T-cell (primary cell): ENCODE measurements at regions of chrX and their contacts with region 1.

Region 1: DNA sequence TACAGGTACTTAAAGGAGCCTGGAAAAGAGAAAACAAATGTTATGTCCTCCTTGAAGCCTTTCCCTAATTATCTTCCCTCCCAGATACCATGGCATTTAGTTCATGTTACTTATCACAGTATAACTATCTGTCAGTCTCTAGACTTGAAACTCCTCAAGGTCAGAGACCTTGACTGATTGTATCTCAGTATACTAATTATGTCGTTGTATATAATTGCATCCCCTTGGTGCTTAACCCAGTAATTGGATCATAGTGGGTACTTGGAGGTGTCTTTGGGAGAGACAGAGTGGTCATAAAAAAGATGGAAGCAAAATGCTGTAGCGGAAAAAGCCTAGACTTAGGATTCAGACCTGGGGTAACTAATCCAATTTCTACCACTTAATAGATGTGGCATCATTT is 8.1 kb downstream of the IGBP1 start:
- DNase-seq: no peak
- ATAC-seq: no peak
- H3K4me3 ChIP-seq: no peak overlapping the region
- H3K4me3 Mint-ChIP-seq: no peak overlapping the region
- H3K27ac ChIP-seq: no peak overlapping the region
- H3K27ac Mint-ChIP-seq: no peak overlapping the region
- H3K4me1 ChIP-seq: peaks cover 0 to 4% of the 10 kb centered on the region in 2 experiments
- H3K4me1 Mint-ChIP-seq: peaks cover 0 to 22% (median 11%) of the 10 kb centered on the region in 3 donors
- H3K27me3 ChIP-seq: no peaks in the 10 kb centered on the region
- H3K27me3 Mint-ChIP-seq: peaks cover 0 to 5% of the 10 kb centered on the region in 2 donors

Region 2: DNA sequence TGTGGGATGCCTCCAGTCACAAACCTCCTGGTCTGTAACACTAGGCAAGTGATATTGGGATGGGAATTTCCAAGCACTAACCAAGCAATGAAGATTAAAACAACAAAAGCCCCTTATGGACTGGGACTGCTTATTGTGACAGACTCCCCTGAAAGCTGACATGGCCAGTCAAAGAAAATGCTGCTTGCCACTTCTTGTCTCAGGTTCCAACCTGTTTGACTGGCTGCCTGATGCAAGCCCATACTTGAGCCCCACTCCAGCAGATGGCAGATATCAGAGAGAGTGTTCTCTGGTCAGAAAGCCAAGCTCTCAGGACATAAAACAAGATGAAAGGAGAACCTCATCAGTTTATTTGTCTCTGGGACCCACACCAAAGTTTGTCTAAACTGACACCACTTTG is 23.7 kb before region 1 on chrX:
- CTCF ChIA-PET with region 1: no interaction called
- POLR2A ChIA-PET with region 1: no interaction called
- DNase-seq: no peak
- ATAC-seq: no peak
- H3K4me3 ChIP-seq: no peak overlapping the region
- H3K4me3 Mint-ChIP-seq: no peak overlapping the region
- H3K27ac ChIP-seq: no peak overlapping the region
- H3K27ac Mint-ChIP-seq: no peak overlapping the region
- H3K4me1 ChIP-seq: no peaks in the 10 kb centered on the region
- H3K4me1 Mint-ChIP-seq: no peaks in the 10 kb centered on the region
- H3K27me3 ChIP-seq: no peaks in the 10 kb centered on the region
- H3K27me3 Mint-ChIP-seq: peaks cover 0 to 25% of the 10 kb centered on the region in 2 donors

Region 3: GRCh38 chrX:70196961-70197805 is 55.8 kb after region 1 on chrX:
- CTCF ChIA-PET with region 1: no interaction called
- POLR2A ChIA-PET with region 1: no interaction called
- DNase-seq: peak; percentile 3 to 79 (median 45)
- ATAC-seq: peak; percentile 74 to 89 (median 78)
- H3K4me3 ChIP-seq: no peak overlapping the region
- H3K4me3 Mint-ChIP-seq: no peak overlapping the region
- H3K27ac ChIP-seq: no peak overlapping the region
- H3K27ac Mint-ChIP-seq: no peak overlapping the region
- H3K4me1 ChIP-seq: no peaks in the 10 kb centered on the region
- H3K4me1 Mint-ChIP-seq: peaks cover 2 to 6% (median 2%) of the 10 kb centered on the region in 3 donors
- H3K27me3 ChIP-seq: no peaks in the 10 kb centered on the region
- H3K27me3 Mint-ChIP-seq: peaks cover 1 to 13% of the 10 kb centered on the region in 2 donors

Region 4: GRCh38 chrX:71098302-71098701 is 956.9 kb after region 1 on chrX:
- CTCF ChIA-PET with region 1: no interaction called
- POLR2A ChIA-PET with region 1: interaction called in 1 of 2 experiments, 14 read pairs
- DNase-seq: peak; percentile 63 to 87 (median 73)
- ATAC-seq: peak; percentile 21 to 42 (median 30)
- H3K4me3 ChIP-seq: no peak overlapping the region
- H3K4me3 Mint-ChIP-seq: peak overlapping the region; percentile 9 to 61 (median 47)
- H3K27ac ChIP-seq: peak overlapping the region; percentile 12
- H3K27ac Mint-ChIP-seq: peak overlapping the region; percentile 71 to 76
- H3K4me1 ChIP-seq: peaks cover 7 to 67% of the 10 kb centered on the region in 2 experiments
- H3K4me1 Mint-ChIP-seq: peaks cover 63 to 69% (median 66%) of the 10 kb centered on the region in 3 donors
- H3K27me3 ChIP-seq: no peaks in the 10 kb centered on the region
- H3K27me3 Mint-ChIP-seq: peaks cover 0 to 4% of the 10 kb centered on the region in 2 donors

Region 5: GRCh38 chrX:71532753-71533425 is 1391.5 kb after region 1 on chrX and contains the start of gene OGT:
- CTCF ChIA-PET with region 1: no interaction called
- POLR2A ChIA-PET with region 1: no interaction called
- DNase-seq: peak; percentile 80 to 96 (median 93)
- ATAC-seq: peak; percentile 79 to 83 (median 80)
- H3K4me3 ChIP-seq: peak within 1 kb of the TSS; percentile 91 to 92
- H3K4me3 Mint-ChIP-seq: peak within 1 kb of the TSS; percentile 97 to 99 (median 98)
- H3K27ac ChIP-seq: peak within 1 kb of the TSS; percentile 93
- H3K27ac Mint-ChIP-seq: peak within 1 kb of the TSS; percentile 93 to 99
- H3K4me1 ChIP-seq: peaks cover 9 to 21% of the 10 kb centered on the region in 2 experiments
- H3K4me1 Mint-ChIP-seq: peaks cover 27 to 32% (median 31%) of the 10 kb centered on the region in 3 donors
- H3K27me3 ChIP-seq: no peaks in the 10 kb centered on the region
- H3K27me3 Mint-ChIP-seq: peaks cover 0 to 3% of the 10 kb centered on the region in 2 donors
- total RNA-seq, gene OGT: 438 to 548 (median 460) TPM